Activated CD8-positive, alpha-beta T cell treated with anti-CD3 and anti-CD28 coated beads for 36 hours (primary cell): ENCODE measurements at regions of chr4 and their contacts with region 1.

Region 1: GRCh38 chr4:121192480-121192879 is 28.4 kb upstream of the TNIP3 start:
- DNase-seq: no peak
- ATAC-seq: peak; percentile 18
- H3K4me3 Mint-ChIP-seq: peak overlapping the region; percentile 31
- H3K27ac Mint-ChIP-seq: no peak overlapping the region
- H3K4me1 Mint-ChIP-seq: peaks cover 52% of the 10 kb centered on the region
- H3K27me3 Mint-ChIP-seq: no peaks in the 10 kb centered on the region
- CTCF ChIP-seq: peak; percentile 89

Region 2: GRCh38 chr4:120948382-120948781 is 244.1 kb before region 1 on chr4:
- CTCF ChIA-PET with region 1: no interaction called
- POLR2A ChIA-PET with region 1: no interaction called
- intact Hi-C with region 1: no loop called
- DNase-seq: no peak
- ATAC-seq: no peak
- H3K4me3 Mint-ChIP-seq: no peak overlapping the region
- H3K27ac Mint-ChIP-seq: no peak overlapping the region
- H3K4me1 Mint-ChIP-seq: no peaks in the 10 kb centered on the region
- H3K27me3 Mint-ChIP-seq: peaks cover 2% of the 10 kb centered on the region
- CTCF ChIP-seq: no peak

Region 3: GRCh38 chr4:120963449-120963848 is 229.0 kb before region 1 on chr4:
- CTCF ChIA-PET with region 1: no interaction called
- POLR2A ChIA-PET with region 1: no interaction called
- intact Hi-C with region 1: no loop called
- DNase-seq: no peak
- ATAC-seq: no peak
- H3K4me3 Mint-ChIP-seq: no peak overlapping the region
- H3K27ac Mint-ChIP-seq: no peak overlapping the region
- H3K4me1 Mint-ChIP-seq: no peaks in the 10 kb centered on the region
- H3K27me3 Mint-ChIP-seq: no peaks in the 10 kb centered on the region
- CTCF ChIP-seq: no peak

Region 4: DNA sequence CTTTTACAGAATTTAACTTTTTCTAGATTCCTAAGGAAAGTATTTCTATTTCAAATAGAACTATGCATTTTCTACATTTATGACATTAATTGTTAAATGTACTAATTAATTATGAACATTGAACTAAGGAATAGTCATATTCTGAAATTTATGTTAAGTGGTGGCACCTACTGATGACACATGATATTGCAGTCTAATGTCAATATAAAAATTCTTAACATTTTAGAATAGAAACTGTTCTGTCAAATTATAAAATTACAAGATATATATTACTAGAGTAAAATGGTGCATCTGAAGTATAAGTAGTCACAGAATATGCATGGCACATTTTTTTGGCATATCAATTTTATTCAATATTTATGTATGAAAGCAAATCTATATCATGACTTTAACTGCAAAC is 80.0 kb before region 1 on chr4:
- CTCF ChIA-PET with region 1: interaction called, 28 read pairs
- POLR2A ChIA-PET with region 1: no interaction called
- intact Hi-C with region 1: no loop called
- DNase-seq: no peak
- ATAC-seq: no peak
- H3K4me3 Mint-ChIP-seq: no peak overlapping the region
- H3K27ac Mint-ChIP-seq: no peak overlapping the region
- H3K4me1 Mint-ChIP-seq: peaks cover 23% of the 10 kb centered on the region
- H3K27me3 Mint-ChIP-seq: no peaks in the 10 kb centered on the region
- CTCF ChIP-seq: peak; percentile 74

Region 5: GRCh38 chr4:121164291-121164690 is 28.2 kb before region 1 on chr4 and contains the start of gene TNIP3:
- CTCF ChIA-PET with region 1: interaction called, 30 read pairs
- POLR2A ChIA-PET with region 1: no interaction called
- intact Hi-C with region 1: no loop called
- DNase-seq: no peak
- ATAC-seq: no peak
- H3K4me3 Mint-ChIP-seq: no peak within 1 kb of the TSS
- H3K27ac Mint-ChIP-seq: no peak within 1 kb of the TSS
- H3K4me1 Mint-ChIP-seq: peaks cover 34% of the 10 kb centered on the region
- H3K27me3 Mint-ChIP-seq: no peaks in the 10 kb centered on the region
- CTCF ChIP-seq: no peak
- total RNA-seq, gene TNIP3: 1.9 to 2.4 TPM

Region 6: GRCh38 chr4:121217351-121217750 is 24.9 kb after region 1 on chr4:
- CTCF ChIA-PET with region 1: interaction called, 29 read pairs
- POLR2A ChIA-PET with region 1: interaction called, 3 read pairs
- intact Hi-C with region 1: no loop called
- DNase-seq: no peak
- ATAC-seq: no peak
- H3K4me3 Mint-ChIP-seq: no peak overlapping the region
- H3K27ac Mint-ChIP-seq: no peak overlapping the region
- H3K4me1 Mint-ChIP-seq: peaks cover 30% of the 10 kb centered on the region
- H3K27me3 Mint-ChIP-seq: no peaks in the 10 kb centered on the region
- CTCF ChIP-seq: no peak

Region 7: GRCh38 chr4:121252224-121252806 is 59.8 kb after region 1 on chr4:
- CTCF ChIA-PET with region 1: interaction called, 155 read pairs
- POLR2A ChIA-PET with region 1: interaction called, 4 read pairs
- intact Hi-C with region 1: loop called (anchors 2 kb)
- DNase-seq: peak; percentile 75
- ATAC-seq: no peak
- H3K4me3 Mint-ChIP-seq: no peak overlapping the region
- H3K27ac Mint-ChIP-seq: no peak overlapping the region
- H3K4me1 Mint-ChIP-seq: peaks cover 57% of the 10 kb centered on the region
- H3K27me3 Mint-ChIP-seq: no peaks in the 10 kb centered on the region
- CTCF ChIP-seq: peak; percentile 87

Region 8: GRCh38 chr4:121307445-121308327 is 115.2 kb after region 1 on chr4:
- CTCF ChIA-PET with region 1: interaction called, 126 read pairs
- POLR2A ChIA-PET with region 1: no interaction called
- intact Hi-C with region 1: loop called (anchors 1 kb)
- DNase-seq: peak; percentile 69
- ATAC-seq: peak; percentile 80
- H3K4me3 Mint-ChIP-seq: no peak overlapping the region
- H3K27ac Mint-ChIP-seq: peak overlapping the region; percentile 50
- H3K4me1 Mint-ChIP-seq: peaks cover 12% of the 10 kb centered on the region
- H3K27me3 Mint-ChIP-seq: no peaks in the 10 kb centered on the region
- CTCF ChIP-seq: peak; percentile 93

Region 9: GRCh38 chr4:121457278-121457875 is 264.9 kb after region 1 on chr4:
- CTCF ChIA-PET with region 1: no interaction called
- POLR2A ChIA-PET with region 1: no interaction called
- intact Hi-C with region 1: no loop called
- DNase-seq: no peak
- ATAC-seq: no peak
- H3K4me3 Mint-ChIP-seq: no peak overlapping the region
- H3K27ac Mint-ChIP-seq: no peak overlapping the region
- H3K4me1 Mint-ChIP-seq: no peaks in the 10 kb centered on the region
- H3K27me3 Mint-ChIP-seq: peaks cover 24% of the 10 kb centered on the region
- CTCF ChIP-seq: no peak